A673 (cell line): ENCODE measurements at regions of chr7 and their contacts with region 1.

Region 1: DNA sequence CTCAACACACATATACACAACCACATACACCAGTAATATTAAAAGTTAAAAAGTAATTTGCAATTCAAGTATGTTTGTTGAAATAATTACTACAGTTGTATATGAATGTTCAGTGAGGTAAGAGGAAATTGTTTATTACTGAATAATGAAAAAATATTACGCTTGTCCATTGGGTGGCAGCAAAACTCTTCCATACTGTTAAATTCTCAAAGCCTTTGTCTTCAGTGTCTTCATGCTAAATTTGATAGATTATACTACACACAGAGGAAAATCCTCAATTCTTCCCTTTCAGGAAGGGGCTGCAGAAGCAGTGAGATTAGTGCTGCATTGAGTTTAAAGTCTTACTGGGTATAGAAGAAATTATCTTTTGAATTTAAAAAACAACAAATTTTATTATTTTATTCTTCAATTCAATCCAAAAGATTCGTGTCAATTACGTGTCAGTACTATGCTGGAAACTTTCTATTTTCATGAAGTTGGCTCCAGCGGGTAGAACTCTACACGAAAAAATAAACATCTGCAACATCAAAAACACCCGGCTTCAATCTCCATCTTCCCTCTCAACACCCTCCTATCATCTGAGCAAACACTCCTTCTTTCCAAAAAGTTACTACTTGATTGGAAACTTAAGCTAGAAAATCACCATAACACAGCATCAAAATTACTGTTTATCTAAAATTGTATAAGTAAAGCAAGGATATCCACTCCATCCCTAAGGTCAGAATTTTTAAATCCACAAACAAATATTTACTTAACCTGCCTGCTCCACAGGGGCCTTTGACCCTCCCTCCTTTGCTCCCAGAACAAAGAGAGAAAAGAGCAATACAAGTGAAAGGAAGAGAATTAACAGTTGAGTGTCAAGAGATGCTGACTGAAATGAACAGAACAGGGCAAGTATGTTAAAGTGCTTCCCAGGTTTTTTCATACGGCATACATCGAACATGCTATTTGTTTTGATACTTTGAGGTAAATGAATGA is 37.0 kb upstream of the TES start:
- DNase-seq: peak; percentile 84
- H3K4me3 ChIP-seq: no peak overlapping the region
- H3K27ac ChIP-seq: peak overlapping the region; percentile 3
- H3K4me1 ChIP-seq: peaks cover 4% of the 10 kb centered on the region
- H3K27me3 ChIP-seq: no peaks in the 10 kb centered on the region
- CTCF ChIP-seq: peak; percentile 68

Region 2: DNA sequence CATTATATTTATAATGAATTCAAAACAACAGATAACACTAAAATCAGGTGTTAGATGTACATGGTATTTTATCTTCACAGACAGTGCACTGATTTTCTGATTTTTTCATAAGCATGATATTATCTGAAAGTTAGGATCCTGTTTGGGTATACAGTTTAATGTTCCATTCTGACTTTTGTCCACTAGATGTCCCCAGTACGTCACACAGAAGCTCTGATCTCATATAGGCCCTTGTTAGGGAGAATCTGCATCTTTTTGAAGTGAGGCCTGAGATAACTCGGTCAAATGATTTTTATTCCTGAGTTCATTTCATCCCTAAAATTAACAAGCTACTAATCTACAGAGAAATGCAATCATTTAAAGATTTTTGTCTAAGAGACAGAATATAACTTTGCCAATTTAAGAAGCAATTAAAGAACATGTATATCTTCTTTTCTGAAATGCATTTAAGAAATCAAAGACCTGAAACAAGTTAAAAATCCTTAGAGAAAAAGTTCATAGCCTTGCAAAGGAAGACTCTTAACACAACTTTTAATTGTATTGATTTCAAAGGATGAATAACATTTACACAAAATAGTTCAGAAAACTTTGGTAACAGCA is 35.0 kb before region 1 on chr7:
- CTCF ChIA-PET with region 1: no interaction called
- POLR2A ChIA-PET with region 1: no interaction called
- intact Hi-C with region 1: loop called (anchors 2 kb)
- DNase-seq: peak; percentile 83
- H3K4me3 ChIP-seq: no peak overlapping the region
- H3K27ac ChIP-seq: no peak overlapping the region
- H3K4me1 ChIP-seq: peaks cover 9% of the 10 kb centered on the region
- H3K27me3 ChIP-seq: no peaks in the 10 kb centered on the region
- CTCF ChIP-seq: peak; percentile 88

Region 3: GRCh38 chr7:116290740-116291139 is 117.4 kb after region 1 on chr7:
- CTCF ChIA-PET with region 1: no interaction called
- POLR2A ChIA-PET with region 1: no interaction called
- intact Hi-C with region 1: no loop called
- DNase-seq: peak; percentile 40
- H3K4me3 ChIP-seq: no peak overlapping the region
- H3K27ac ChIP-seq: no peak overlapping the region
- H3K4me1 ChIP-seq: peaks cover 4% of the 10 kb centered on the region
- H3K27me3 ChIP-seq: no peaks in the 10 kb centered on the region
- CTCF ChIP-seq: 0 out of 2 replicates have a peak, but pooled peaks have one; percentile 22

Region 4: DNA sequence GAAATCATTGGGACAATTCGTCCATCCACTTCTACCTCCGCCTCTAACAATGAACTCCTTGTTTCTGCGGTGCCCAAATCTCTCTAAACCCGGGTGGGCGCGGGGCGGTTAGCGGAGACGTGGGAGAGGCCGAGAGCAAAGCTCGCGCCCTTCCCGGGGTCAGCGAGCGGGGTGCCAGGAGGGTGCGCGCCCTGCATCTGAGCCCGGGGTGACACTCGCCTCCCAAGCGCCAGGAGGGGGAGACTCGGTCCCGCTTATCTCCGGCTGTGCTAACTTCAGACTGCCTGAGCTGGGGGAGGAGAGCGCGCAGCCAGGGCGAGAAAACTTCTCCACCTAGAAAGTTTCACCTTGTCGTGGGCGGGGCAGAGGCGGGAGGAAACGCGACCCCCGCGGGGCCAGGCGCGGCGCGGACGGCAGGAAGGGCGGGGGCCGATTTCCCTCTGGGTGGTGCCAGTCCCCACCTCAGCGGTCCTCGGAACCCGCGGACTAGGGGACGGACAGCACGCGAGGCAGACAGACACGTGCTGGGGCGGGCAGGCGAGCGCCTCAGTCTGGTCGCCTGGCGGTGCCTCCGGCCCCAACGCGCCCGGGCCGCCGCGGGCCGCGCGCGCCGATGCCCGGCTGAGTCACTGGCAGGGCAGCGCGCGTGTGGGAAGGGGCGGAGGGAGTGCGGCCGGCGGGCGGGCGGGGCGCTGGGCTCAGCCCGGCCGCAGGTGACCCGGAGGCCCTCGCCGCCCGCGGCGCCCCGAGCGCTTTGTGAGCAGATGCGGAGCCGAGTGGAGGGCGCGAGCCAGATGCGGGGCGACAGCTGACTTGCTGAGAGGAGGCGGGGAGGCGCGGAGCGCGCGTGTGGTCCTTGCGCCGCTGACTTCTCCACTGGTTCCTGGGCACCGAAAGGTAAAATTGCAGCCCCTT is 498.6 kb after region 1 on chr7 and contains the start of gene MET:
- CTCF ChIA-PET with region 1: no interaction called
- POLR2A ChIA-PET with region 1: no interaction called
- intact Hi-C with region 1: loop called (anchors 10 kb)
- DNase-seq: peak; percentile 82
- H3K4me3 ChIP-seq: peak within 1 kb of the TSS; percentile 64
- H3K27ac ChIP-seq: no peak within 1 kb of the TSS
- H3K4me1 ChIP-seq: no peaks in the 10 kb centered on the region
- H3K27me3 ChIP-seq: no peaks in the 10 kb centered on the region
- CTCF ChIP-seq: peak; percentile 69
- total RNA-seq, gene MET: 5.7 and 6.8 TPM in 2 replicates